Transverse colon (tissue), 4 donors: ENCODE measurements at regions of chr1 and their contacts with region 1.

Region 1: DNA sequence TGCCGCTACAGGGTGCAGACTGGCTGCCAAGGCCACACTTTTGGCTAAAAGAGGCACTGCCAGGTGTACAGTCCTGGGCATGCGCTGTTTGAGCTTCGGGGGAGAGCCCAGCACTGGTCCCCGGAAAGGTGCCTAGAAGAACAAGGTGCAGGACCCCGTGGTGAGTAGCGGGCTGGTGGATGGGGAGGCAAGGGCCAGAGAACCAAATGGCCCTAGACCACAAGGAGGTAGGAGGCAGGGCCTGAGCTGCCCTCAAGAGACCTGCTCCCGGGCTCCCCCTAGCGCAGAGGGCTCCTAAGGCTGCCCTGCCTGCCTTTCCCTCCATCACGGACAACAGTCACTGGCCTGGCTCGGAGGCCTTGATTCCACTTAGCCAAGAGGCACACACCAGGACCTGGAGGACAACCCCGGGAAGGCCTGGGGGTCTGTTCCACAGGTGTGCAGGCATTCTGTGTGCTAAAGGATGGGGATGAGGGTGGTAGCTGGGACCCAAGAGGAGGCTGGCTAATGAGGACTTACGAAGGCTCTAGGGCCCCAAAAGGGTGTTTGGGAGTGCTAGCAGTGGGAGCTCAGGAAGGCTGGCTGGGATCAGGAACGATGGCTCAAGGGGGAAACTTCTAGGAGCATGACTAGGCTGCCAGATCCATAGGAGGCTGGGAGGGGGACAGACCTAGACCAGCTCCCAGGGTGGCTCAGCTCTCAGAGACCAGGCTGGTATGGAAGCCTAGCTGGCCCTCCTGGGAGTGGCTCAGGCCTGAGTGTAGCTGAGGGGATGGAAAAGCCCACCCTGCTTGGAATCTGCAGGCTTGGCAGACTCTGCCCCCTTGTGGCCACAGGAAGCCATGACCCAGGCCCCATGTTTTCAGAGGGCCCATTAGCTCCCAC is 742 bp downstream of the ARTN start:
- DNase-seq: peak; percentile 82
- H3K4me3 ChIP-seq: peak overlapping the region in 2 of 4 donors; percentile 24 to 26
- H3K27ac ChIP-seq: peak overlapping the region in 2 of 4 donors; percentile 80 to 84
- H3K4me1 ChIP-seq: peaks cover 19 to 39% (median 32%) of the 10 kb centered on the region in 4 donors
- H3K27me3 ChIP-seq: peaks cover 13% of the 10 kb centered on the region
- CTCF ChIP-seq: peak; percentile 85 to 92 (median 88)
- EP300 ChIP-seq: no peak
- POLR2A ChIP-seq: no peak

Region 2: GRCh38 chr1:43757343-43758053 is 176.8 kb before region 1 on chr1:
- in situ Hi-C with region 1: loop called in 3 of 4 experiments (anchors 5 to 10 kb)
- intact Hi-C with region 1: no loop called
- DNase-seq: no peak
- H3K4me3 ChIP-seq: no peak overlapping the region
- H3K27ac ChIP-seq: peak overlapping the region in 1 of 4 donors; percentile 25
- H3K4me1 ChIP-seq: peaks cover 0 to 13% (median 5%) of the 10 kb centered on the region in 4 donors
- H3K27me3 ChIP-seq: no peaks in the 10 kb centered on the region
- CTCF ChIP-seq: no peak
- EP300 ChIP-seq: no peak
- POLR2A ChIP-seq: no peak

Region 3: DNA sequence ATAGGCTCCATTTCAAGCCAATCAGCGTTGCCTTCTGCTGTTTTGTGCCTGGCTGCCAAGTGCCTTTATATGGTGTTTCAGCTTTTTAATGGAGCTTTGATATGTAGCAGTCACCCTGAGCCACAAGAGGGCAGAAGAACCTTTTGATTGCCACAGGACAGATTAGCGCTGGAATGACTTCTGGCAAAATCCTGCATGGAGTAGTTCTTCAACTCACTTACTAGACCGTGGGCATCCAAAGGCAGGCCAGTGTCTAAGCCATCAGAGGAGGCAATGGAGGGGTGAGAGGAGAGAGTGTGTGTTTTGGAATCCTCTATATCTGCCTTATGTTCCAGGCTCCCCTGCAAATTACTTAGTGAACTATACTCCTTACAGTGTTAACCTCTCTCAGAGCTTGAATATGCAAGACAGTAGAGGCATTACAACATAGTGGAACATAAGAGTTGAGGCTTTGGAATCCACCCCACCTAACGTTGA is 170.8 kb before region 1 on chr1:
- in situ Hi-C with region 1: loop called in 3 of 4 experiments (anchors 5 to 10 kb)
- intact Hi-C with region 1: loop called (anchors 2 kb)
- DNase-seq: peak; percentile 74
- H3K4me3 ChIP-seq: no peak overlapping the region
- H3K27ac ChIP-seq: no peak overlapping the region
- H3K4me1 ChIP-seq: peaks cover 0 to 17% (median 2%) of the 10 kb centered on the region in 4 donors
- H3K27me3 ChIP-seq: no peaks in the 10 kb centered on the region
- CTCF ChIP-seq: peak; percentile 78 to 94 (median 81)
- EP300 ChIP-seq: no peak
- POLR2A ChIP-seq: no peak

Region 4: GRCh38 chr1:43776043-43776761 is 158.1 kb before region 1 on chr1:
- in situ Hi-C with region 1: loop called in 1 of 4 experiments (anchors 10 kb)
- intact Hi-C with region 1: no loop called
- DNase-seq: no peak
- H3K4me3 ChIP-seq: no peak overlapping the region
- H3K27ac ChIP-seq: no peak overlapping the region
- H3K4me1 ChIP-seq: peaks cover 0 to 4% (median 0%) of the 10 kb centered on the region in 4 donors
- H3K27me3 ChIP-seq: no peaks in the 10 kb centered on the region
- CTCF ChIP-seq: no peak
- EP300 ChIP-seq: no peak
- POLR2A ChIP-seq: no peak